HepG2 (cell line): ENCODE measurements at regions of chr11 and their contacts with region 1.

Region 1: GRCh38 chr11:22875869-22876473 is 15.7 kb upstream of the CCDC179 start:
- DNase-seq: peak; percentile 85
- ATAC-seq: peak; percentile 91
- H3K4me3 ChIP-seq: no peak overlapping the region
- H3K27ac ChIP-seq: no peak overlapping the region
- H3K4me1 ChIP-seq: no peaks in the 10 kb centered on the region
- H3K27me3 ChIP-seq: no peaks in the 10 kb centered on the region
- CTCF ChIP-seq: peak; percentile 82
- EP300 ChIP-seq: no peak
- POLR2A ChIP-seq: no peak
- RAD21 ChIP-seq: no peak; the same call in 1 of the 2 replicates

Region 2: DNA sequence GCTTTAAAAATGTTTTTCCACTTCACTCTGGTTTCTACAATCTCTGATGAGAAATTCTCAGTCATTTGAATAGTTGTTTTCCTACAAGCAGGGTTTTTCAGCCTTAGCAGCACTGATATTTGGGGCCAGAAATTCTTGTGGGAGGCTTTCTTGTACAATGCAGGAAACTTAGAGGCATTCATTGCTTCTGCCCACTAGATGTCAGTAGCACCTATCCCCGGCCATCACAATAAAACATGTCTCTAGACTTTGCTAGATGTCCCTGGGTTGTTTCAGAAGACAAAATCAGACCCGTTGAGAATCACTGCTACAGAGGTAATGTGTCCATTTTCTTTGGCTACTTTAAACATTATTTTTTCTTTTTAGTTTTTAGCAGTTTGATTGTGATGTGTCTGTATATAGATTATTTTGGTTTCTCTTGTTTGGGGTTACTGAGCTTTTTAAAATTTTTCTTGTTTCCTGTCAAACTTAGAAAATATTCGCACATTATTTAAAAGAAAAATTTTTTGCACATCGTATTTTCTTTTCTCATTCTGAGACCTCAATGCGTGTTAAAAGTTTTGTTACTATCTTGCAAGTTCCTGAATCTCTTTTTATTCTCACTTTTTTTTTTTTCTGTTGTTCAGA is 45.1 kb after region 1 on chr11:
- CTCF ChIA-PET with region 1: no interaction called
- POLR2A ChIA-PET with region 1: no interaction called
- in situ Hi-C with region 1: no loop called
- intact Hi-C with region 1: loop called (anchors 2 kb)
- DNase-seq: peak; percentile 37
- ATAC-seq: peak; percentile 92
- H3K4me3 ChIP-seq: no peak overlapping the region
- H3K27ac ChIP-seq: no peak overlapping the region
- H3K4me1 ChIP-seq: no peaks in the 10 kb centered on the region
- H3K27me3 ChIP-seq: no peaks in the 10 kb centered on the region
- CTCF ChIP-seq: peak; percentile 67
- EP300 ChIP-seq: no peak
- POLR2A ChIP-seq: no peak
- RAD21 ChIP-seq: no peak

Region 3: GRCh38 chr11:23112987-23113886 is 237.3 kb after region 1 on chr11:
- CTCF ChIA-PET with region 1: no interaction called
- POLR2A ChIA-PET with region 1: no interaction called
- in situ Hi-C with region 1: no loop called
- intact Hi-C with region 1: loop called (anchors 1 kb)
- DNase-seq: peak; percentile 69
- ATAC-seq: peak; percentile 93
- H3K4me3 ChIP-seq: peak overlapping the region in 1 of 3 experiments; percentile 44; a peak in 2 of 6 replicates
- H3K27ac ChIP-seq: no peak overlapping the region
- H3K4me1 ChIP-seq: peaks cover 13% of the 10 kb centered on the region
- H3K27me3 ChIP-seq: no peaks in the 10 kb centered on the region
- CTCF ChIP-seq: peak; percentile 67
- EP300 ChIP-seq: peak in 1 of 2 experiments; percentile 45; a peak in 2 of 4 replicates
- POLR2A ChIP-seq: no peak
- RAD21 ChIP-seq: peak; percentile 37; the same call in 1 of the 2 replicates

Region 4: GRCh38 chr11:23540101-23540561 is 664.2 kb after region 1 on chr11:
- CTCF ChIA-PET with region 1: no interaction called
- POLR2A ChIA-PET with region 1: no interaction called
- in situ Hi-C with region 1: no loop called
- intact Hi-C with region 1: loop called (anchors 10 kb)
- DNase-seq: peak; percentile 44
- ATAC-seq: peak; percentile 96
- H3K4me3 ChIP-seq: no peak overlapping the region
- H3K27ac ChIP-seq: no peak overlapping the region
- H3K4me1 ChIP-seq: no peaks in the 10 kb centered on the region
- H3K27me3 ChIP-seq: no peaks in the 10 kb centered on the region
- CTCF ChIP-seq: peak; percentile 74
- EP300 ChIP-seq: no peak
- POLR2A ChIP-seq: no peak
- RAD21 ChIP-seq: 0 out of 2 replicates have a peak, but pooled peaks have one; percentile 16

Region 5: DNA sequence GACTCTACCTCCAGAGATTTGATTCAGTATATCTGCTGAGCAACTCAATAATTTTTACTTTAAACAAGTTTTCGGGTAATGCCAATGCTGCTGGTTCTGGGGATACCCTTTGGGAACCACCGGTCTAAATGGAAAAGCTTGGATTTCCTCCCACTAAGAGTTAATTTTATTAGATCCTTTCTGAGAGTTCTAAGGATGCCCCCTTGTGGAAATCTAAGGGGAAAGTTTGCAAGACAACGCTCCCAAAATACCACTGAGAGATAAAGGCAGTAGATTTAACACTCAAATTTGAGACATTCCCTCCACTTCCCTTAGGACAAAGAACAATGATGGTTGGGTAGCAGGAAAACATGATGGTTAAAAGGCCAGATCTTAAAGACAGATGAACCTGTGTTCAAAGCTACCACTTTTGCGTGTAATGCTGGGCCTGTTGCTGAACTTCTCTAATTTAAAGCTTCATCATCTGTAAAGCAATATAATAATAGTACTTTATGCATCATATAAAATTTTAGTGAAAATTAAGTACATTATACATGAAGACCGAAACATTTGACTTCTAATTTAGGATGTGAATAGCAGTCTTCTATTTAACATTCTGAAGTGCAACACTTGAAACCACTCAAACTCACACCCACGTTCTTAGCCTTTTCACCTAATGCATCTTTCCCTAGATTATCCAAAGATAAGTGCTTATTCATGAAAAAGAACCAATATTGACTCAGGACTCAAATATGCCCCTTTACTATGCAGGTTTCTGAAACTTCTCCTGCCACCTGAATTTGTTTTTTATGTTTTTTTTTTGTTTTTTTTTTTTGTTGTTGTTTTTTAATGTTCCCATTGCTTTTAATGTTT is 1510.8 kb after region 1 on chr11:
- CTCF ChIA-PET with region 1: interaction called, 3 read pairs
- POLR2A ChIA-PET with region 1: no interaction called
- in situ Hi-C with region 1: no loop called
- intact Hi-C with region 1: loop called (anchors 5 kb)
- DNase-seq: peak; percentile 12
- ATAC-seq: no peak
- H3K4me3 ChIP-seq: no peak overlapping the region
- H3K27ac ChIP-seq: no peak overlapping the region
- H3K4me1 ChIP-seq: no peaks in the 10 kb centered on the region
- H3K27me3 ChIP-seq: no peaks in the 10 kb centered on the region; a peak in 1 of 5 replicates
- CTCF ChIP-seq: peak; percentile 33
- EP300 ChIP-seq: no peak
- POLR2A ChIP-seq: no peak
- RAD21 ChIP-seq: no peak